HepG2 (cell line): ENCODE measurements at regions of chr4 and their contacts with region 1.

Region 1: GRCh38 chr4:123396307-123397143 is at the start of gene SPRY1:
- DNase-seq: peak; percentile 95
- ATAC-seq: peak; percentile 84
- H3K4me3 ChIP-seq: peak within 1 kb of the TSS; percentile 83 to 96 (median 90)
- H3K27ac ChIP-seq: peak within 1 kb of the TSS; percentile 90
- H3K4me1 ChIP-seq: peaks cover 16% of the 10 kb centered on the region
- H3K27me3 ChIP-seq: no peaks in the 10 kb centered on the region; a peak in 1 of 5 replicates
- CTCF ChIP-seq: no peak; the same call in 1 of the 2 replicates
- EP300 ChIP-seq: 0 out of 4 replicates have a peak, but pooled peaks of 1 of the 2 experiments have one; percentile 16
- POLR2A ChIP-seq: peak; percentile 92 to 94
- RAD21 ChIP-seq: no peak; the same call in 1 of the 2 replicates
- total RNA-seq, gene SPRY1: 22.5 and 24.7 TPM in 2 replicates

Region 2: DNA sequence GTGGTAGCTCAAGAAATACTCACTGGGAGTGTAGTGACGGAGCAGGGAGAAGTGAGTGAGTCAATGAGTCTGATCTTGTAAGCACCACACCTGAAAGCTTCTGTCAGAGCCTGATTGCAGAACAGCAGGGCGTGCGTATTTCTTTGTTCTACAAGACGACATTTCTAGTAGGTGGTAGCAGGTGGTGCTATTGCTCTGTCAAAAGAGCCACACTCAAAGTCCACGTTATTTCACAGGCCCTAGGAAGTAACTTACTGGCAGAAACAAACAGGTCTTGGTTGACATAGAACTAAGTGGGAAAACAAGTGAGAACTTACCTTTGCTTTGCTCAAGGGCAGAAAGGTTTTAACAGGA is 46.4 kb before region 1 on chr4:
- CTCF ChIA-PET with region 1: no interaction called
- POLR2A ChIA-PET with region 1: no interaction called
- in situ Hi-C with region 1: no loop called
- intact Hi-C with region 1: loop called (anchors 1 kb)
- DNase-seq: peak; percentile 81
- ATAC-seq: peak; percentile 91
- H3K4me3 ChIP-seq: peak overlapping the region in 1 of 3 experiments; percentile 15; a peak in 1 of 6 replicates
- H3K27ac ChIP-seq: no peak overlapping the region
- H3K4me1 ChIP-seq: peaks cover 48% of the 10 kb centered on the region
- H3K27me3 ChIP-seq: no peaks in the 10 kb centered on the region
- CTCF ChIP-seq: peak; percentile 78
- EP300 ChIP-seq: 0 out of 4 replicates have a peak, but pooled peaks of 1 of the 2 experiments have one; percentile 33
- POLR2A ChIP-seq: no peak
- RAD21 ChIP-seq: peak; percentile 47

Region 3: GRCh38 chr4:123444290-123444731 is 47.8 kb after region 1 on chr4:
- CTCF ChIA-PET with region 1: no interaction called
- POLR2A ChIA-PET with region 1: interaction called, 8 read pairs
- in situ Hi-C with region 1: no loop called
- intact Hi-C with region 1: loop called (anchors 5 kb)
- DNase-seq: peak; percentile 93
- ATAC-seq: peak; percentile 89
- H3K4me3 ChIP-seq: peak overlapping the region in 2 of 3 experiments; percentile 18 to 43; a peak in 1 of 6 replicates
- H3K27ac ChIP-seq: peak overlapping the region; percentile 61
- H3K4me1 ChIP-seq: peaks cover 55% of the 10 kb centered on the region
- H3K27me3 ChIP-seq: no peaks in the 10 kb centered on the region
- CTCF ChIP-seq: no peak
- EP300 ChIP-seq: peak in 1 of 2 experiments; percentile 87; a peak in 2 of 4 replicates
- POLR2A ChIP-seq: no peak
- RAD21 ChIP-seq: no peak

Region 4: DNA sequence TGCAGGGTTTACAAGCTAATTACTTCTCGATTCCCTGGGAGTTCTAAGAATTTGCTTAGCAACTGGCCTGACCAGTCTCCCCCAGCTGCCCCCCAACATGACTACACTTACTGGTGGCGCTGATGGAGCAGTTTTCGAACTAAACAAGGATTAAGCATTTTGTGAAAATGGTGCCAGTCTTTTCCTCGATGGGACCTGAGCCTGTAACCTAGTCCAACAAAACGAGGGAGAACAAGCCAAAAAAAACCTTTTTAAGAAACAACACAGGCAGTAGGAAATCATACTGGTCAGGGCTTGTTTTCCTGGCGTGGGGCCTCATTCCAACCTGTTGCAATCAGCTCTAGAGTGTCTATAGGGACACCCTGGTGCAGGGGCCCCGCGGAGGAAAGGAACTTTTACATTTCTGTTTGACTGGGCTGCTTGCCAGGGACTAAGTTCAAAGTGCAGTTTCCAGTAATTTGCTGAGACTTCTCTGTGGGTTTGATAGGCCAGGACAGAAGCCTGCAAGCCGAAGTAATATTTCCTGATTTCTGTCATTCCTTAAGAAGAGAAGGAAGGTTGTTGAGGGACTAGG is 158.8 kb after region 1 on chr4:
- CTCF ChIA-PET with region 1: no interaction called
- POLR2A ChIA-PET with region 1: interaction called, 24 read pairs
- in situ Hi-C with region 1: loop called (anchors 5 kb)
- intact Hi-C with region 1: loop called (anchors 1 kb)
- DNase-seq: peak; percentile 98
- ATAC-seq: peak; percentile 97
- H3K4me3 ChIP-seq: peak overlapping the region; percentile 25 to 54 (median 39); a peak in 5 of 6 replicates
- H3K27ac ChIP-seq: peak overlapping the region; percentile 98
- H3K4me1 ChIP-seq: peaks cover 76% of the 10 kb centered on the region
- H3K27me3 ChIP-seq: no peaks in the 10 kb centered on the region
- CTCF ChIP-seq: peak; percentile 8; the same call in 1 of the 2 replicates
- EP300 ChIP-seq: peak; percentile 72 to 99
- POLR2A ChIP-seq: peak in 1 of 2 experiments; percentile 59; a peak in 2 of 4 replicates
- RAD21 ChIP-seq: peak; percentile 50; the same call in 1 of the 2 replicates

Region 5: GRCh38 chr4:123599920-123600810 is 203.6 kb after region 1 on chr4:
- CTCF ChIA-PET with region 1: no interaction called
- POLR2A ChIA-PET with region 1: interaction called, 3 read pairs
- in situ Hi-C with region 1: no loop called
- intact Hi-C with region 1: loop called (anchors 2 kb)
- DNase-seq: peak; percentile 98
- ATAC-seq: peak; percentile 92
- H3K4me3 ChIP-seq: peak overlapping the region in 2 of 3 experiments; percentile 34 to 42; a peak in 2 of 6 replicates
- H3K27ac ChIP-seq: peak overlapping the region; percentile 78
- H3K4me1 ChIP-seq: peaks cover 42% of the 10 kb centered on the region
- H3K27me3 ChIP-seq: no peaks in the 10 kb centered on the region
- CTCF ChIP-seq: 0 out of 2 replicates have a peak, but pooled peaks have one; percentile 15
- EP300 ChIP-seq: peak; percentile 83 to 96; a peak in 3 of 4 replicates
- POLR2A ChIP-seq: peak in 1 of 2 experiments; percentile 69; a peak in 2 of 4 replicates
- RAD21 ChIP-seq: no peak

Region 6: DNA sequence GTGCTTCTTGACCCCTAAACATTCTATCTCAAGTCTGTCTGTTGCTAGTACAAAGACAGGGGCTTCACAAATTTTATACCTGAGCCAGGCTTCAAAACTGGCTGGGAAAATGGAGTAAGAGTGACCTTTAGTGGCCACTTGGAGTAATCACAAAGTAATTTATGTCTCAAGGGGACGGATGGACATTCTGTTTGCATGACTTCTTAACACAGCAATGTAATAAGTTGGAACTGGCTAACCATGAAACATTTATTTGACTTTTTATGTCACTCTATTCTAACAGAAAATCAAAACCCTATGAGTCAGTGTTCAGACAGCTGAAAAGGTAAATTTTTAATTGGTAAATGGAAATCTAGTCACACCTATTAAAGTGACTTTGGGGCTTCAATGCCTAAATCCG is 715.4 kb after region 1 on chr4:
- CTCF ChIA-PET with region 1: no interaction called
- POLR2A ChIA-PET with region 1: no interaction called
- in situ Hi-C with region 1: loop called (anchors 25 kb)
- intact Hi-C with region 1: loop called (anchors 1 kb)
- DNase-seq: peak; percentile 55
- ATAC-seq: peak; percentile 84
- H3K4me3 ChIP-seq: no peak overlapping the region
- H3K27ac ChIP-seq: no peak overlapping the region
- H3K4me1 ChIP-seq: no peaks in the 10 kb centered on the region
- H3K27me3 ChIP-seq: no peaks in the 10 kb centered on the region
- CTCF ChIP-seq: peak; percentile 83
- EP300 ChIP-seq: no peak
- POLR2A ChIP-seq: no peak
- RAD21 ChIP-seq: peak; percentile 65